WTC11 (cell line): ENCODE measurements at regions of chr12 and their contacts with region 1.

Region 1: GRCh38 chr12:5511644-5512600 is 80.0 kb downstream of the NTF3 start:
- DNase-seq: peak; percentile 65
- ATAC-seq: peak; percentile 69
- H3K4me3 Mint-ChIP-seq: no peak overlapping the region
- H3K27ac Mint-ChIP-seq: no peak overlapping the region
- H3K4me1 Mint-ChIP-seq: peaks cover 33% of the 10 kb centered on the region
- H3K27me3 Mint-ChIP-seq: no peaks in the 10 kb centered on the region; the same call in 1 of the 2 replicates
- CTCF ChIP-seq: peak; percentile 34; the same call in 1 of the 2 replicates

Region 2: GRCh38 chr12:5493018-5493417 is 18.9 kb before region 1 on chr12:
- CTCF ChIA-PET with region 1: interaction called, 15 read pairs
- POLR2A ChIA-PET with region 1: no interaction called
- DNase-seq: no peak
- ATAC-seq: peak; percentile 77
- H3K4me3 Mint-ChIP-seq: no peak overlapping the region
- H3K27ac Mint-ChIP-seq: no peak overlapping the region
- H3K4me1 Mint-ChIP-seq: peaks cover 5% of the 10 kb centered on the region
- H3K27me3 Mint-ChIP-seq: no peaks in the 10 kb centered on the region
- CTCF ChIP-seq: no peak

Region 3: DNA sequence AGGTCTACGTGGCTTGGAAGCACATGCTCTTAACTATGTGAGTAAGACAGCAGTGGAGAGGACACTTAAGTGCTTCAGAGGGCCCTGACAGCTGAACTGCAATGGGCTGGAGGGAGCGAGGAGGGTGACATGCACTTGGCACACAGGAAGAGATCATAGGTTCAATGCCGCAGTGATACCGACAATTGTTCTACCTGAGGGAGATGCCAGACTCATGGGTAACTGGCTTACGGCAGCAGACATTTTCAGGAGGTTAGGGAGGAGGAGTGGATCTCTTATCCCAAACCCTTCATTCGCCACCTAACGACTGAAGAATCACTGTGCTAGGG is 11.6 kb before region 1 on chr12:
- CTCF ChIA-PET with region 1: interaction called, 14 read pairs
- POLR2A ChIA-PET with region 1: no interaction called
- DNase-seq: no peak
- ATAC-seq: no peak
- H3K4me3 Mint-ChIP-seq: no peak overlapping the region
- H3K27ac Mint-ChIP-seq: no peak overlapping the region; the same call in 1 of the 2 replicates
- H3K4me1 Mint-ChIP-seq: peaks cover 14% of the 10 kb centered on the region; the same call in 1 of the 2 replicates
- H3K27me3 Mint-ChIP-seq: no peaks in the 10 kb centered on the region
- CTCF ChIP-seq: no peak